Right cardiac atrium (tissue), 5 donors: ENCODE measurements at regions of chr11 and their contacts with region 1.

Region 1: GRCh38 chr11:108121274-108122155 is at the start of gene ACAT1:
- DNase-seq: peak; percentile 98 to 100 (median 99)
- ATAC-seq: peak; percentile 97 to 98
- H3K4me3 ChIP-seq: peak within 1 kb of the TSS; percentile 54
- H3K27ac ChIP-seq: peak within 1 kb of the TSS; percentile 87
- H3K4me1 ChIP-seq: peaks cover 12% of the 10 kb centered on the region
- H3K27me3 ChIP-seq: no peaks in the 10 kb centered on the region
- total RNA-seq, gene ACAT1: 128 to 198 (median 164) TPM

Region 2: DNA sequence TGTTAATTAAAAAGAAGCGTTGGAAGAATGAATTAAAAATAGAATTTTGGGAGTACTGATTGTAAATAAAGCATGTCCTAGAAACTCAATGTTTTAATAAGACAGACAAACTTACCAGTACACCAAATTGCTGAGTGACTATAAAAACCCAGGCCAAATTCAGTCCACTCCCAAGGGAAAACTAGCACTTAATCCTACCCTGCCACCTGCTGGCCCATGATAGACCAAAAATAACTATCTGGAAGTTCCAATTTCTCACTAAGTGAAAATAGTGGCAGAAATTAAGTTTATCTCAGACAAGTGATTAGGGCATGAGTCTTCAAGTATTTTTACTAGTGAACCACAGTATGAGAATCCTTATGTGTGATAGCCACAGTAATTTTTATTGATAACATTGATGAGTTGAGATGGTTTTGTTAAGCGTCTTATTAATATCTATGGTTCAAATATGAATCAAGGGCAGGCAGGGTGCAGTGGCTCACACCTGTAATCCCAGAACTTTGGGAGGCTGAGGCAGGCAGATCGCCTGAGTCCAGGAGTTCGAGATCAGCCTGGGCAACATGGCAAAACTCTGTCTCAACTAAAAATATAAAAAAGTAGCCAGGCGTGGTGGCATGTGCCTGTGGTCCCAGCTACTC is 533.6 kb after region 1 on chr11:
- intact Hi-C with region 1: loop called in 1 of 4 experiments (anchors 5 kb)
- DNase-seq: peak in 1 of 3 donors; percentile 52
- ATAC-seq: peak in 1 of 2 donors; percentile 51
- H3K4me3 ChIP-seq: no peak overlapping the region
- H3K27ac ChIP-seq: no peak overlapping the region
- H3K4me1 ChIP-seq: no peaks in the 10 kb centered on the region
- H3K27me3 ChIP-seq: no peaks in the 10 kb centered on the region